ENCODE measurements at regions of chr2 and their contacts with region 1.

Region 1: DNA sequence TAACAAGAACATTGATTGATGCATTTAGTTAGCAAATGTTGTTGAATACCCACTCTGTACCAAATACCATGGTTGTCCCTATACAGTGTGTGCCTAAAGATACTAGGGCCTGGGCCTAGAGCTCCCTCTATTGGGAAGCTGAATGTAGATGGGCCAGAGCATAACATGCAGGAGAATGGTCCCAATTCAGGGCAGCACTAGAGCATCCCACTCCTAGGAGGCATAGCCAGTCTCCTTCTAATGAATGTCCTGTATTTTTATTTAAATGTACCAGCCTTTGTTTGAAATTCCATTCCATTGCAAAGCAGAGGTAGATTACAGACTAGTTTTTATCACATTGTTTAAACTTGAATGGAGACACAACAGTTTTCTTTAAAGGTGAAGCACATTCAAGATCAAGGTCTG is 90.6 kb downstream of the FEZ2 start:
- DNase-seq: peak; percentile 35
- H3K4me3 ChIP-seq: no peak overlapping the region
- H3K27ac ChIP-seq: no peak overlapping the region
- H3K4me1 ChIP-seq: no peaks in the 10 kb centered on the region
- H3K27me3 ChIP-seq: no peaks in the 10 kb centered on the region
- CTCF ChIP-seq: peak; percentile 14 to 64 (median 54)
- POLR2A ChIP-seq: no peak

Region 2: GRCh38 chr2:36663851-36664695 is 156.7 kb after region 1 on chr2:
- intact Hi-C with region 1: loop called (anchors 10 kb)
- DNase-seq: peak; percentile 23
- H3K4me3 ChIP-seq: no peak overlapping the region
- H3K27ac ChIP-seq: no peak overlapping the region
- H3K4me1 ChIP-seq: no peaks in the 10 kb centered on the region
- H3K27me3 ChIP-seq: no peaks in the 10 kb centered on the region
- CTCF ChIP-seq: peak in 3 of 4 experiments; percentile 63 to 70 (median 63)
- POLR2A ChIP-seq: no peak

Measured in prostate gland (tissue), 2 donors.